ENCODE measurements at regions of chr3 and their contacts with region 1.

Region 1: DNA sequence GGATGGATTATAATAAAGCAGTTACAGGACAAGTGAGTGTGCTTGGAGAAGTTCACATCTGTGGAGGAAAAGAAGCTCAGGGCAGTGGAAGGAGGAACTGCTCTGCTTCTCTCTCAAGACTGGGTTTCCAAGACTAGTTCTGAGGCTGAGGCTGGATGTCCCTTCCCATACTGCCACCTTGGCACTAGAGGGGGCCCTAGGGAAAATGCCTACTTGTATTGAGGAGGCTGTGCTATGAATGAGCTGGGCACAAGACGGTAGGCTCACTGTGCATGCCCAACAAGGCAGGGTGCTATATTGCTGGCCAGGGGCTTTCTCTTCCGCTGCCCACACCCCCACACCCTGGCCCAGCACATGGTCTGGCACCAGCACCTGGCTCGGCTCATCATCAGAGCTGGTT is 65.2 kb downstream of the SLCO2A1 start:
- DNase-seq: no peak
- H3K4me3 Mint-ChIP-seq: no peak overlapping the region
- H3K27ac Mint-ChIP-seq: peak overlapping the region; percentile 85
- H3K4me1 Mint-ChIP-seq: peaks cover 18% of the 10 kb centered on the region
- H3K27me3 Mint-ChIP-seq: no peaks in the 10 kb centered on the region
- CTCF ChIP-seq: no peak

Region 2: GRCh38 chr3:133943639-133944141 is 20.9 kb before region 1 on chr3:
- CTCF ChIA-PET with region 1: interaction called, 5 read pairs
- POLR2A ChIA-PET with region 1: interaction called, 17 read pairs
- intact Hi-C with region 1: loop called (anchors 2 kb)
- DNase-seq: peak; percentile 92
- H3K4me3 Mint-ChIP-seq: peak overlapping the region; percentile 39
- H3K27ac Mint-ChIP-seq: peak overlapping the region; percentile 52
- H3K4me1 Mint-ChIP-seq: peaks cover 55% of the 10 kb centered on the region
- H3K27me3 Mint-ChIP-seq: no peaks in the 10 kb centered on the region
- CTCF ChIP-seq: no peak

Region 3: GRCh38 chr3:133996251-133996661 is 31.7 kb after region 1 on chr3:
- CTCF ChIA-PET with region 1: no interaction called
- POLR2A ChIA-PET with region 1: no interaction called
- intact Hi-C with region 1: no loop called
- DNase-seq: no peak
- H3K4me3 Mint-ChIP-seq: no peak overlapping the region
- H3K27ac Mint-ChIP-seq: no peak overlapping the region
- H3K4me1 Mint-ChIP-seq: peaks cover 7% of the 10 kb centered on the region
- H3K27me3 Mint-ChIP-seq: no peaks in the 10 kb centered on the region
- CTCF ChIP-seq: no peak